Heart left ventricle (tissue), 16 donors: ENCODE measurements at regions of chr1 and their contacts with region 1.

Region 1: DNA sequence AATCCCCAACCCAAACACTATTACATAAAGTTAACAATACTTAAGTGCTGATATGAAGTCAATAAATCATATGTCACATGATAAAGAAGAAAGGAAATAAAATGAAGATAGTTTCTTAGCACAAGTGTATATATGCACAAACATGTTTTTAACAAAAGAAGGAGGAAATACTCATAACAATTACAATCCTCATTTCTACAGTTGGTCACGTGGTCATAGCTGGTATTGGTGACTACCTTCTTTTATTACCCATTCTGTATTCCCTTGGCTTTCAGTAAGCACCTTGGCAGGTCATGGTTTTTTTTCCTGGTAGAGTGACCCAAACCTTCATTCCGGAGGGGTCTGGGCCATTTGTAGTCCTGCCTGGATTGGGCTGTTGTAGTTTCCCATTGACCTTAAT is 137.1 kb upstream of the KCND3 start:
- DNase-seq: no peak
- ATAC-seq: no peak
- H3K4me3 ChIP-seq: no peak overlapping the region
- H3K27ac ChIP-seq: no peak overlapping the region
- H3K4me1 ChIP-seq: no peaks in the 10 kb centered on the region
- H3K27me3 ChIP-seq: no peaks in the 10 kb centered on the region
- CTCF ChIP-seq: no peak
- POLR2A ChIP-seq: no peak

Region 2: GRCh38 chr1:111813521-111814304 is 312.9 kb before region 1 on chr1:
- intact Hi-C with region 1: no loop called
- DNase-seq: no peak
- ATAC-seq: peak in 1 of 4 donors; percentile 18
- H3K4me3 ChIP-seq: no peak overlapping the region
- H3K27ac ChIP-seq: no peak overlapping the region
- H3K4me1 ChIP-seq: peaks cover 0 to 4% (median 0%) of the 10 kb centered on the region in 12 donors
- H3K27me3 ChIP-seq: no peaks in the 10 kb centered on the region
- CTCF ChIP-seq: peak in 2 of 12 donors; percentile 4 to 6
- POLR2A ChIP-seq: no peak

Region 3: DNA sequence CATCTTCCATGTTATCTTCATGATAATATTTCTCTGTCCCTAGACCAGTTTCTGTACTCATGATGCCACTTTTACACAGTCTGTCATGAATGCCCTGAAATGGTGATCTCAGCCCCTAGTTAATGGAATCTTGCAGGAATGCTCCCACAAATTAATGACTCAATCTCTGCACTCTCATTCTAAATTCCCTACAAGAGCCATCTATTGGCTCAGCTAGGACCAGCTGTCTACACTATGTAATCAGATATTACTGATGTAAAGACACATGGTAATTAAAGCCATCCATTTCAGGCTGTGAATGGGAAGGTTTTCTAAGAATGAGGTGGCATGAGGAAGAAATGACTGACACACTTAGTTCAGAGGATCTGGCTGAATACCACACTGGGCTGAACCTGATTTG is 62.0 kb after region 1 on chr1:
- intact Hi-C with region 1: loop called in 1 of 10 experiments (anchors 10 kb)
- DNase-seq: no peak
- ATAC-seq: no peak
- H3K4me3 ChIP-seq: no peak overlapping the region
- H3K27ac ChIP-seq: no peak overlapping the region
- H3K4me1 ChIP-seq: no peaks in the 10 kb centered on the region
- H3K27me3 ChIP-seq: no peaks in the 10 kb centered on the region
- CTCF ChIP-seq: no peak
- POLR2A ChIP-seq: no peak

Region 4: GRCh38 chr1:112247036-112247597 is 120.5 kb after region 1 on chr1:
- intact Hi-C with region 1: no loop called
- DNase-seq: no peak
- ATAC-seq: no peak
- H3K4me3 ChIP-seq: no peak overlapping the region
- H3K27ac ChIP-seq: no peak overlapping the region
- H3K4me1 ChIP-seq: peaks cover 0 to 16% (median 2%) of the 10 kb centered on the region in 12 donors
- H3K27me3 ChIP-seq: no peaks in the 10 kb centered on the region
- CTCF ChIP-seq: no peak
- POLR2A ChIP-seq: no peak